BJ (cell line): ENCODE measurements at regions of chr1 and their contacts with region 1.

Region 1: GRCh38 chr1:225592362-225593025 is 60.4 kb downstream of the ENAH start:
- DNase-seq: no peak
- H3K4me3 ChIP-seq: no peak overlapping the region
- H3K27me3 ChIP-seq: no peaks in the 10 kb centered on the region
- CTCF ChIP-seq: no peak

Region 2: GRCh38 chr1:225454733-225455132 is 137.8 kb before region 1 on chr1:
- CTCF ChIA-PET with region 1: no interaction called
- POLR2A ChIA-PET with region 1: no interaction called
- DNase-seq: peak; percentile 39
- H3K4me3 ChIP-seq: no peak overlapping the region
- H3K27me3 ChIP-seq: no peaks in the 10 kb centered on the region; the same call in 1 of the 2 replicates
- CTCF ChIP-seq: no peak

Region 3: DNA sequence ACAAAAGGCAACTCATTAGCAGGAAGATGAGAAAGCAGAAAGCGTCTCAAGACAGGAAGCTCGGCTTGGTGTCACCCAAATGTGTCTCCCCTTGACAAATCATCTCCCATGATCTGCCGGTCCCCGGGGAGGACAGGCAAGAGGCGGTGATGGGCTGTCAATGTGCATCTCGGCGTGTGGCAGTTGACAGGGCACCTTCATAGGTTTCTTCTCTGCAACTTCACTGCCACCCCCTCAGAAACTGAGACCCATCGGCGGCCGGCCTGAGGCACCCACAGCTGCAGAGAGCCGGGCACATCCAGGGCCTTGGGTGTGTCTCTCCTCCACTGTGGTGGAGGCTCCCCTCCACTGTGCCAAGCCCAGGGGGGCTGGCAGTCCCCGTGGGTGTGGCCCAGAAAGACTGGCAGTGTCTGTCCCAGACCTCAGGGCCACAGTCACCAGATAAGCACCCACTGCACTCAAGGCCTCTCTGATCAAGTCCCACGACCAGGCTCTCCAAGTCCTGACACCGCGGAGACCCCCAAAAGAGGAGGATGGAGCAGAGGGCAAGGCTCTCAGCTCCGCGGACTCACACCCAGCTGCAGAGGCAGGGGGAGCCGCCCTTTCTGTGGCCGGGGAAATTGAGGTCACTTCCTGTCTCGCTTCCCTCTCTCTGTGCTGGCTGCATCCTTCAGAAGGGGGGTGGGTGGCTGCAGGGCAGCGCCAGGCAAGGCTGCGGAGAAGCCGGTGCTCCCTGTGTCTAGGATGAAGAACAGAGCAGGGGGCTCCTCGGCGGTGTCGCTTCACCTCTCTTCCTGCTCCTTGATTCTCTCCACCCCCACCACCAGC is 125.1 kb before region 1 on chr1:
- CTCF ChIA-PET with region 1: no interaction called
- POLR2A ChIA-PET with region 1: no interaction called
- DNase-seq: no peak
- H3K4me3 ChIP-seq: no peak overlapping the region
- H3K27me3 ChIP-seq: no peaks in the 10 kb centered on the region; the same call in 1 of the 2 replicates
- CTCF ChIP-seq: no peak

Region 4: DNA sequence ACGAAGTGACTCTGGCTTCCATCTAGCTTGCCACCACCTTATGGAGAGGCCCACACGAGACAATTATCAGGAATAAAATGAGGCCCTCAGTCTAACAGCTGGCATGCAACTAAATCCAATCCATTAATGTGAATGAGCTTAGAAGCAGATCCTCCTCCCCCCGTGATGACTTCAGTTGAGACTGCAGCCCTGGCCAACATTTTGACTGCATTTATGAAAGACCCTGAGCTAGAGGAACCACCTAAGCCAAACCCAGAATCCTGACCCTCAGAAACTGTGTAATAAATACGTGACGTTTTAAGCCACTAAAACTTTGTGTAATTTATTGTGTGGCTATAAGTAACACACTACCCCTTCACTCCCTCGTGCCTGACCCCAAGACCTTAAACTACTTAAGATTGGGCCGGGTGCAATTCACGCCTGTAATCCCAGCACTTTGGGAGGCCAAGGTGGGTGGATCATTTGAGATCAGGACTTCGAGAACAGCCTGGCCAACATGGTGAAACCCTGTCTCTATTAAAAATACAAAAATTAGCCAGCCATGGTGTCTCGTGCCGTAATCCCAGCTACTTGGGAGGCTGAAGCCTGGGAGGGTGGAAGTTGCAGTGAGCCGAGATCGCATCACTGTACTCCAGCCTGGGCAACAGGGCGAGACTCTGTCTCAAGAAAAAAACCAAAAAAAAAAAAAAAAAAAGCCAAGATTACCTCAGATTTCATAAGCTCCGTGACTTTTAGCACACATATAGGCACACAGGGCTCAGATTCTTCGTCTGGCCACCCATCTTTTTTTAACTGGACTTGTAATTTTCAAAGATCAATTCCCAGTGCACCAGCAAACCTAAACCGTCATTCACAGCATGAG is 12.0 kb before region 1 on chr1:
- CTCF ChIA-PET with region 1: interaction called, 12 read pairs
- POLR2A ChIA-PET with region 1: no interaction called
- DNase-seq: no peak
- H3K4me3 ChIP-seq: no peak overlapping the region
- H3K27me3 ChIP-seq: no peaks in the 10 kb centered on the region
- CTCF ChIP-seq: no peak